Left lung (tissue), 14 donors: ENCODE measurements at regions of chr2 and their contacts with region 1.

Region 1: DNA sequence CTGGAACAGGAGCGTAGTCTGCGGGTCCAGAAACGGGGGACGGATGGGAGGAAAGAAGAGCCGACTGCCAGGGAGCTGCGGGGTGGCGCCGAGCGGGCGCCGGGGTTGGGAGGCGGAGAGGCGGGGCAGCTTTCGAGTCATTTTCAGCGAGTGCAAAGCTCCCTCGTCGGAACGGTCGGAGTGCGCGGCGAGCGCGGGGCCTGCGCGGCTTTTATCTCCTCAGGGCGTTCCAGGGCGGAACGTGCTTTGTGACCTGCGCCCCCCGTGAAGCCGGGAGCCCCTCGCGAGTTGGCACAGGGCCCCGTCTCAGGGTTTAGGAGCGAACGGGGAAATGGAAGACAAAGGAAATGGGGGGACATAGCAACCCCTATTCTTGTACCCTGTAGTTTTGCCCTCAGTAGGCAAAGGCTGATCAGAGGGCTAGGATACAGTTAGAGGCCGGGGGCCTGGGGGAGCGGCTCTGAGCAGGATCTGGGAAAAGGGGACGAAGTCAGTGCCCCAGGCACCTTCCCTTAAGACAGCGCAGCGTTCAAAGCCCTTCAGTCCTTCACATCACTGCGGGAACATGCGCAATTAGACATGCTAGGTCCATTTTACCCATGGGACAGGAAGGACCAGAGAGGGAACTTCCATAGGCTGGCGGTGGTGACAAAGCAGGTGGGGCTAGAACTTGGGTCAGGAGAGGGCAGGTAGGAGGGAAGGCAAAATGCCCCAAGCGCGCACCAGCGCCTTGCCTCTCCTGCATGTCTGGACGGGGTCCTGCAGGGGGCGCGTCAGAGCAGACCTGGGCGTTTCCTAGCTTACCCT is 60.1 kb upstream of the IL1RL1 start:
- DNase-seq: peak in 3 of 4 donors; percentile 47 to 95 (median 81)
- ATAC-seq: peak; percentile 97
- H3K4me3 ChIP-seq: peak overlapping the region; percentile 37 to 40
- H3K27ac ChIP-seq: peak overlapping the region in 1 of 2 donors; percentile 72
- H3K4me1 ChIP-seq: peaks cover 0 to 39% of the 10 kb centered on the region in 2 donors
- H3K27me3 ChIP-seq: peaks cover 0 to 8% of the 10 kb centered on the region in 2 donors
- CTCF ChIP-seq: peak; percentile 63 to 87

Region 2: DNA sequence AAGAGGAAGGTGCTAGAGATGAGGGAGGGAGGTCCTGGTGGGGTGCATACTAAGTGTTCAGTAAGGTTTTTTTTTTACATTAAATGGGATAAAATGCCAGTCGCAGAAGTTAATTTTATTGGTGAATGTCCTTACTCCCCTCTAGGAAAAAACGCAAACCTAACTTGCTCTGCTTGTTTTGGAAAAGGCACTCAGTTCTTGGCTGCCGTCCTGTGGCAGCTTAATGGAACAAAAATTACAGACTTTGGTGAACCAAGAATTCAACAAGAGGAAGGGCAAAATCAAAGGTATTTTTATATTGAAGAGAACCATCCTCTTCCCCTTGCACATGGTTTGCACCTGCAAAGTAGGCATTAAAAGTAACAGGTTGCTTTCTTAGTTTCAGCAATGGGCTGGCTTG is 91.6 kb after region 1 on chr2:
- intact Hi-C with region 1: loop called in 1 of 2 experiments (anchors 10 kb)
- DNase-seq: peak in 1 of 4 donors; percentile 45
- ATAC-seq: no peak
- H3K4me3 ChIP-seq: no peak overlapping the region
- H3K27ac ChIP-seq: no peak overlapping the region
- H3K4me1 ChIP-seq: no peaks in the 10 kb centered on the region
- H3K27me3 ChIP-seq: no peaks in the 10 kb centered on the region
- CTCF ChIP-seq: no peak

Region 3: GRCh38 chr2:102442967-102443828 is 192.0 kb after region 1 on chr2:
- intact Hi-C with region 1: loop called in 1 of 2 experiments (anchors 10 kb)
- DNase-seq: peak in 2 of 4 donors; percentile 13 to 31
- ATAC-seq: peak; percentile 90
- H3K4me3 ChIP-seq: no peak overlapping the region
- H3K27ac ChIP-seq: peak overlapping the region in 1 of 2 donors; percentile 48
- H3K4me1 ChIP-seq: peaks cover 0 to 12% of the 10 kb centered on the region in 2 donors
- H3K27me3 ChIP-seq: no peaks in the 10 kb centered on the region
- CTCF ChIP-seq: peak; percentile 60 to 79